Activated naive CD4-positive, alpha-beta T cell treated with anti-CD3 and anti-CD28 coated beads for 36 hours (primary cell): ENCODE measurements at regions of chr2 and their contacts with region 1.

Region 1: GRCh38 chr2:197453161-197453914 is at the start of gene COQ10B:
- DNase-seq: peak; percentile 99
- H3K4me3 Mint-ChIP-seq: peak within 1 kb of the TSS; percentile 100
- H3K27ac Mint-ChIP-seq: peak within 1 kb of the TSS; percentile 100
- H3K4me1 Mint-ChIP-seq: peaks cover 45% of the 10 kb centered on the region
- H3K27me3 Mint-ChIP-seq: no peaks in the 10 kb centered on the region
- total RNA-seq, gene COQ10B: 17.5 to 17.8 TPM

Region 2: GRCh38 chr2:196798980-196799379 is 654.4 kb before region 1 on chr2:
- CTCF ChIA-PET with region 1: no interaction called
- intact Hi-C with region 1: loop called (anchors 1 kb)
- DNase-seq: no peak
- H3K4me3 Mint-ChIP-seq: peak overlapping the region; percentile 91
- H3K27ac Mint-ChIP-seq: peak overlapping the region; percentile 90
- H3K4me1 Mint-ChIP-seq: peaks cover 44% of the 10 kb centered on the region
- H3K27me3 Mint-ChIP-seq: peaks cover 3% of the 10 kb centered on the region

Region 3: DNA sequence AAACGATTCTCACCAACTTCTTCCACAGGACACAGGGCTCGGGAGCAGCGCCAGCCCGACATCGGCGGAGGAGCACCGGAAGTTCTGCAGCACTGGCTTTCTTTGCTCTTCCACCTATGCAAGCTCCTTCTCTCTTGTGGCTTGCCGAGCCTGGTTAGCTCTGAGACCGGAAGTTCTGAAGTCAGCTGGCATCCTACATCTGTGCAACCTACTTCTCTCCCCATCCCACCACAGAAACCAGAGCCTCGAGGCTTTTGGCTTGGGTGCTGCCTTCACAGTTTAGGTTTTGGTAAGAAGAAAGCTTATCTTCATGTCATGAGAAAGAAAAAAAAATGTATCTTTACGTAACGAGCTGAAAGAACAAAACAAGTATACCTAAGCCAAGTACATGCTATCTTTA is 254.4 kb before region 1 on chr2:
- CTCF ChIA-PET with region 1: no interaction called
- intact Hi-C with region 1: loop called (anchors 2 kb)
- DNase-seq: peak; percentile 93
- H3K4me3 Mint-ChIP-seq: peak overlapping the region; percentile 83
- H3K27ac Mint-ChIP-seq: peak overlapping the region; percentile 96
- H3K4me1 Mint-ChIP-seq: peaks cover 86% of the 10 kb centered on the region
- H3K27me3 Mint-ChIP-seq: no peaks in the 10 kb centered on the region

Region 4: DNA sequence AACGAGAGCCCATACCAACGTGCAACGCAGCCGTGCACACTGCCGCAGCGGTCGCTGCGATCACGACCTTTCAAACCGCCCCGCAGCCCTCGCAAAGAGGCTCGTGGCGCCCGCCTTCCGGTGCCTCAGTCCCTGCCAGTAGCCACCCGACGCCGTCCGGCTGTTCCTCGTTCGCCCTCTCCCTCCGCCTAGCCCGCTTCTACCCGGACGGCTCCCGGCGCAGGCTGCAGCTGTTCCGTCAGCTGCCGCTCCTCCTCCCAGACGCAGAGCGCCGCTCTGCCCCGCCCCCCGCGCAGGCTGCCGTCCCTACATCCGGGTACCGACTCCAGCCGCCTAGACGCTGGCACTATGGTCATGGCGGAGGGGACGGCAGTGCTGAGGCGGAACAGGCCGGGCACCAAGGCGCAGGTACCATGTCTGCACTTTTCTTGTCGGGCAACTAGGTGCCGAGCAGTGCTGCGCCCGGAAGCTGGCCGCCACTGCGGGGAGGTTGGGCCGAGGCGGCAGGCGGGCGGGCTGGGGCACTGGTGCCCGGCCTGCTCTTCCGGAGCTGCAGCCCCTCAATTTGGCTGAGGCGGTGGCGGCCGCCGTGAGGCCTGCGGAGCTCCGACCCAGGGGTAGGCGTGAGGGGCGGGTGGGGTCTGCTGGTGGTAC is 62.5 kb after region 1 on chr2 and contains the start of gene MOB4:
- CTCF ChIA-PET with region 1: no interaction called
- intact Hi-C with region 1: loop called (anchors 1 kb)
- DNase-seq: peak; percentile 93
- H3K4me3 Mint-ChIP-seq: peak within 1 kb of the TSS; percentile 98
- H3K27ac Mint-ChIP-seq: peak within 1 kb of the TSS; percentile 89
- H3K4me1 Mint-ChIP-seq: peaks cover 37% of the 10 kb centered on the region
- H3K27me3 Mint-ChIP-seq: no peaks in the 10 kb centered on the region
- total RNA-seq, gene MOB4: 10.7 to 14.1 TPM